A549 (cell line): ENCODE measurements at regions of chr15 and their contacts with region 1.

Region 1: GRCh38 chr15:79184465-79184892 is 93.9 kb upstream of the RASGRF1 start:
- DNase-seq: peak; percentile 68 to 76
- ATAC-seq: peak; percentile 88 to 91
- H3K4me3 ChIP-seq: no peak overlapping the region
- H3K27ac ChIP-seq: no peak overlapping the region
- H3K4me1 ChIP-seq: peaks cover 2% of the 10 kb centered on the region
- CTCF ChIP-seq: peak; percentile 99
- EP300 ChIP-seq: no peak
- POLR2A ChIP-seq: no peak
- RAD21 ChIP-seq: peak; percentile 96 to 99

Region 2: DNA sequence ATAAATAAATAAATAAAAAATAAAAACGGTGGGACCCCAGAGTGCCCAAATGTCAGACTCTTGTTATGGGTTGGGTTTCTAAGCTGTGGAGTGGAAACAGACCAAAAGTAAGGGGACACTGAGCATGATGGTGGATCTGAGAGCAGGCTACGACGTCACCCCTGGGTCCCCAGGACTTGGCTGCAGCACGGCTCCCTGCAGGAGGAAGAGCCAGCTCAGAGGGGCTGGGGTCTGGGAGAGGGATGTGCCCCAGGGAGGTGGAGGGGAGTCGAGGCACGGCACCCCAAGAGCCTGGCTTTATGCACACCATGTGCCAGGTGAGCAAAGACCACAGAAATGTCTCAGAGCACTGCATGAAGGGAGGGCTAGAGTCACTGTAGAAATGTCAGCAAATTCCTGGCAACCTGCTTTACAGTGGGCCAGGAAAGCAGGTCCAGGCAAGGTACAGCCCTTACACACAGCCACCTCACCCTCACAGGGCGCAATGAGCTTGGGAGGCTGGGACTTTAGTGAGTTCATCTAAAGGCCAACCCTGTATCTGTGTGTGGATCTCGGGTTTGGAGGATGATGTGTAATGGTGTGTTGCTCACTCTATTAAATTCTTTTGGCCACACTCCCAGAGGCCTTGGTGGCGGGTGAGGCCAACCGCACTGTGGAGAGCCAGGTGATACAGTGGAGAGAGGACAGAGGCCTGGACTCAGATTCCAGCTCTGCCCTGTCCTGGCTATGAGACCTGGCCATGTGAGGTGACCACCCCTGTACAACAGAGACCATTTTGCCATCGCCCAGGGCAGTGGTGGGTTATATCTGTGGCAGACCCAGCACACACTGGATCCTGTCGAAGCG is 253.7 kb before region 1 on chr15:
- CTCF ChIA-PET with region 1: interaction called, 15 read pairs
- POLR2A ChIA-PET with region 1: no interaction called
- DNase-seq: peak; percentile 68 to 82
- ATAC-seq: peak; percentile 57 to 73
- H3K4me3 ChIP-seq: no peak overlapping the region
- H3K27ac ChIP-seq: peak overlapping the region; percentile 58 to 84; a peak in 5 of 6 replicates
- H3K4me1 ChIP-seq: peaks cover 17% of the 10 kb centered on the region
- CTCF ChIP-seq: no peak
- EP300 ChIP-seq: no peak
- POLR2A ChIP-seq: no peak
- RAD21 ChIP-seq: no peak

Region 3: GRCh38 chr15:79004336-79004735 is 180.1 kb before region 1 on chr15:
- CTCF ChIA-PET with region 1: interaction called, 29 read pairs
- POLR2A ChIA-PET with region 1: no interaction called
- DNase-seq: peak in 1 of 2 experiments; percentile 72
- ATAC-seq: peak; percentile 35 to 73; a peak in 5 of 6 replicates
- H3K4me3 ChIP-seq: no peak overlapping the region
- H3K27ac ChIP-seq: peak overlapping the region; percentile 46 to 80
- H3K4me1 ChIP-seq: peaks cover 11% of the 10 kb centered on the region
- CTCF ChIP-seq: no peak
- EP300 ChIP-seq: no peak
- POLR2A ChIP-seq: no peak
- RAD21 ChIP-seq: no peak

Region 4: DNA sequence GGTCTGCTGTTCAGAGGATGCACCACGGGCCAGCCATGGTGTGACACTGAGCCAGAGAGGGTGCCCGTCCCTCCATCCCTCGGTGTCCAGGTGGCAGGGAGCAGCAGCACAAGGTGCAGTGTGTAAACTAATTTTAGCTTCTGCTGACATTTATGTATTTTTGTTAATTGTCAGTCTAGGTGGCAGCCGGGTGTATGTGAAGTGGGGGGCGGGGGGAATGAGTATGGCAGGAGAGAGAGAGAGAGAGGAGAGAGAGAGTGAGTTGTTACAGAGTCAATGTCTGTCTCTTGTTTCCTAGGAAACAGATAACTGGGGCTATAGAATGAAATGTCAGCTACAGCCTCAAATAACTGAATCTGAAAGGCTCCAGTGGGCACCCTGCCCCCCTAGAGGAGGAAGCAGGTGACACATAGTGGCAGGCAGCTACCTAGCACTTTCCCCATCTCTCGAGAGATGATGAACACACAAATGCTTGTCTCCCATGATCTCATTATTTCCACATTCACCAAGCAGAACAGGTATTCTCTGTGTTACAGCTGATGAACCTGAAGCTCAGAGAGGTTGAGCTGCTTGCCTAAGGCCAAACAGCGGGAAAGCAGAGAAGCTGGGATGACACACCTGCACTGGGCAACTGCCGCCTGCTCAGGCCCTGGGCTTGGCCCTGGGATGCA is 118.6 kb before region 1 on chr15:
- CTCF ChIA-PET with region 1: interaction called, 11 read pairs
- POLR2A ChIA-PET with region 1: no interaction called
- DNase-seq: no peak
- ATAC-seq: peak in 1 of 2 experiments; percentile 27; a peak in 1 of 6 replicates
- H3K4me3 ChIP-seq: no peak overlapping the region
- H3K27ac ChIP-seq: no peak overlapping the region
- H3K4me1 ChIP-seq: no peaks in the 10 kb centered on the region
- CTCF ChIP-seq: no peak
- EP300 ChIP-seq: no peak
- POLR2A ChIP-seq: no peak
- RAD21 ChIP-seq: no peak

Region 5: DNA sequence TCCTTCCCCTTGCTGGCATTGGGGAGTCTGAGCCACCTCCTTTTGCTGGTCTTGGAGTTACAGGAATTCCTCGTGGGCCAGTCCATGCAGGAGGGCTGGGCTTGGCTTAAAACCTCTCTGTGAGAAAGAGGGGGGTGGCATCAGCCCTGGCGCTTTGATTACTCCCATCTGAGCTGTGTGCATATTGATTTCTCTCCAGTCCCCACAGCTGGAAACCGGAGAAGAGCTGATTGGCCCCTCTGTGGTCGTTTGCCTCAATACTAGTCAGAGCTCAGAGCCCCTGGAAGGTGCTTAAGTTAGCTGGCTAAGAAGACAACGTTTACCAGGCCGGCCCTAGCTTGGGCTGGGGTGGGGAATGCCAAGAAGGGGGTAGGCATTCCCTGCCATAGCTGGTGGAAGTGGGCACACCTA is 89.9 kb before region 1 on chr15:
- CTCF ChIA-PET with region 1: interaction called, 14 read pairs
- POLR2A ChIA-PET with region 1: no interaction called
- DNase-seq: no peak
- ATAC-seq: no peak
- H3K4me3 ChIP-seq: no peak overlapping the region
- H3K27ac ChIP-seq: no peak overlapping the region
- H3K4me1 ChIP-seq: peaks cover 17% of the 10 kb centered on the region
- CTCF ChIP-seq: no peak
- EP300 ChIP-seq: no peak
- POLR2A ChIP-seq: no peak
- RAD21 ChIP-seq: no peak

Region 6: DNA sequence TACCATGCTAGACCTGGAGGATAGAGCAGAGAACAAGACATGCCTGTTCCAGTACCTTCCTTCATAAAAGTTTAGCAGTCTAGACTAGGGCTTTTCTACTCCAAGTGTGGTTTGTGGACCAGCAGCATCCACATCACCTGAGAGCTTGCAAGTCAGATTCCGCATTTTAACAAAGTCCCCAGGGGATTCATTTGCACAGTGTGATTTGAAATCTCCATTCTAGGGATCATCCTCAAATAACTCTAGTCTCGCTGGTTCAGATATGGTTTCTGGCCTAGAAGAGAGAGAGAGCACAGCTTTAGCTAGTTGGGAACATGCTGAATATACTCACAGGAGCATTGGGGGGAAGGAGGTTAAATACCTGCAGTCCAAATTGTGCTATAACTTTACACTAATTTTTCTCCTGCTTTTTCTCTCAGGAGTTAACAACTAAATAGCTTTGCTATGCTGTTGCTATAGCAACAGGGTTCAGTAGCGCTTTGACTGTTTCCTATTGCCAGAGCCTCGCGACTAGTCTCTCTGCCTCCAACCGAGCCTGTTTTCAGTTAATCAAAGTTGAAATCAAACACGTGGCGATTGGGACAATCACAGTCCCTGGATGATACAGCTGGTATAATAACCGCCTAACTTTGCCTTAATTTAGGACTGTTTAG is 29.9 kb before region 1 on chr15:
- CTCF ChIA-PET with region 1: interaction called, 23 read pairs
- POLR2A ChIA-PET with region 1: no interaction called
- DNase-seq: no peak
- ATAC-seq: no peak
- H3K4me3 ChIP-seq: no peak overlapping the region
- H3K27ac ChIP-seq: no peak overlapping the region
- H3K4me1 ChIP-seq: no peaks in the 10 kb centered on the region
- CTCF ChIP-seq: no peak
- EP300 ChIP-seq: no peak
- POLR2A ChIP-seq: no peak
- RAD21 ChIP-seq: no peak

Region 7: DNA sequence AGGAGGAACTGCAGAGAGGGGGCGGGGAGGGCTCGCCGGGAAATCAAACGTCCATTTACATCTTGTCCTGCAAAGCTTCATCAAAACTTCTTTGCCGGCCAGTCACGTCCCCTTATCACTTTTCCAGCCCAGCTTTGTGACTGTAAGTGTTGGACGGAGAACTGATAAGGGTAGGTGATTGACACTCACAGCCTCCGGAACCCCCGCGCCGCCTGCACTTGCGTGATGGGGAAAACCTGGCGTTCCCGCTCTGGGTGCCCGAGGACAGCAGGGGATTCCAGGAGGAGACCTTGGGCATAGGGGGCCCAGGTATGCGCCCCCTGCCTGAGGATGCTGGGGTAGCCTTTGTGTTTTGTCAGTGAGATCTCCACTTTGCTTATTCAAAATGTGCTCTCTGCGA is 25.2 kb after region 1 on chr15:
- CTCF ChIA-PET with region 1: interaction called, 62 read pairs
- POLR2A ChIA-PET with region 1: no interaction called
- DNase-seq: no peak
- ATAC-seq: no peak
- H3K4me3 ChIP-seq: no peak overlapping the region
- H3K27ac ChIP-seq: no peak overlapping the region
- H3K4me1 ChIP-seq: no peaks in the 10 kb centered on the region
- CTCF ChIP-seq: no peak
- EP300 ChIP-seq: no peak
- POLR2A ChIP-seq: no peak
- RAD21 ChIP-seq: no peak

Region 8: DNA sequence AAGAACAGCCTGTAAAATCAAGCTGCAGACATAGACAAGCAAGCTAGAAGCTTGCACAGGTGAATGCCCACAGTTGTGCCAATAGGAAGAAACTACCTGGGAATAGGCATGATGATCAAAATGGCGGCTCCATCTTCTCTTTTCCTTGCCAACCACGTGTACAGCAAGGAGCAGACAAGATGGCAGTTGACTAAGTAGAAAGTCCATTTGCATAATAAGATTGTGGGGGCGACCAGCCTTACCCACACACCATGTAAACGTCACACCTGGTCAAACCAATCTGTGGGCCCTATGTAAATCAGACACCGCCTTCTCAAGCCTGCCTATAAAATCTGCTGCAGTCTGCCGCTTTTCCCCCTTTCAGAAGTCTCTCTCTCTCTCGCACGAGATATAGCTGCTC is 73.0 kb after region 1 on chr15:
- CTCF ChIA-PET with region 1: no interaction called
- POLR2A ChIA-PET with region 1: no interaction called
- DNase-seq: peak in 1 of 2 experiments; percentile 7
- ATAC-seq: no peak
- H3K4me3 ChIP-seq: no peak overlapping the region
- H3K27ac ChIP-seq: no peak overlapping the region
- H3K4me1 ChIP-seq: no peaks in the 10 kb centered on the region
- CTCF ChIP-seq: no peak
- EP300 ChIP-seq: no peak
- POLR2A ChIP-seq: no peak
- RAD21 ChIP-seq: no peak